Activated CD4-positive, alpha-beta memory T cell treated with anti-CD3 and anti-CD28 coated beads for 36 hours (primary cell): ENCODE measurements at regions of chr6 and their contacts with region 1.

Region 1: GRCh38 chr6:109690737-109691621 is at the starts of genes AK9 and FIG4:
- DNase-seq: peak; percentile 95
- H3K4me3 Mint-ChIP-seq: peak within 1 kb of the TSS; percentile 96
- H3K27ac Mint-ChIP-seq: peak within 1 kb of the TSS; percentile 89
- H3K4me1 Mint-ChIP-seq: peaks cover 30% of the 10 kb centered on the region
- H3K27me3 Mint-ChIP-seq: no peaks in the 10 kb centered on the region
- total RNA-seq, gene AK9: 2.2 to 2.8 TPM
- total RNA-seq, gene FIG4: 17.3 to 18.2 TPM

Region 2: DNA sequence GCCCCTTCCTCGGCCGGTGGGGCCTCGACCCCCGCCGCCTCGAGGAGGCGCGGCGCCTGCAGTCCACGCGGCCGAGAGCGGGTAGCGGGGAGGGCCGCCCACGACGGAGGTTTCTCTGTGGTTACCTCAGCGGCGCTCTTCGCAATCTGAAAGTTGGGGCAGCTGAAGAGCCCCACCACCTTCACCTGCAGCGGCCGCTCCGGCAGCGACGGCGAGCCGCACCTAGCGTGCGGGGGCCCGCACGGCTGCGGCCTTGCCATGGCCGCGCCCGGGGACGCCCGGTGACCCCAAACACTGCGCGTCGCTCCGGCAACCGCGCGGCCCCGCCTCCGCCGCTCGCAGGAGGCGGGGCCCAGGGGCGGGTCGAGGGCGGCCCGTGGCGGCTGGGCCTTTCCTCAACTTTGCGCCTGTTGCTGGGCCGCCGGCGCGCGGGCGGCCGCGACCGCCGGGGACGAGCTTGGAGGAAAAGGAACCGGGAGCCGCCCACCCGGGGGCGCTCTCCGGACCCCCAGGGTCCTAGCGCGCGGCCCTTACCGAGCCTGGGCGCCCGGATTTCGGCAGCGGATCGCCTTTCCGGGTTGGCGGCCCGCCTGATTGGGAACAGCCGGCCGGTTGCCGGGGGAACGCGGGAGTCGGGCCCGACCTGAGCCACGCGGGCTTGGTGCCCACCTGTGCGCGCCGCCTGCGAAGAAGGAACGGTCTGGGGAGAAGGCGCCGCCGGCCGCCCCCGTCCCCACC is 250.5 kb before region 1 on chr6 and contains the starts of genes PPIL6 and SMPD2:
- CTCF ChIA-PET with region 1: no interaction called
- POLR2A ChIA-PET with region 1: no interaction called
- intact Hi-C with region 1: loop called (anchors 1 kb)
- DNase-seq: peak; percentile 84
- H3K4me3 Mint-ChIP-seq: peak within 1 kb of the TSS; percentile 87
- H3K27ac Mint-ChIP-seq: peak within 1 kb of the TSS; percentile 82
- H3K4me1 Mint-ChIP-seq: peaks cover 21% of the 10 kb centered on the region
- H3K27me3 Mint-ChIP-seq: no peaks in the 10 kb centered on the region
- total RNA-seq, gene PPIL6: 0.43 to 0.46 TPM
- total RNA-seq, gene SMPD2: 9.7 TPM

Region 3: GRCh38 chr6:109526905-109527628 is 163.9 kb before region 1 on chr6:
- CTCF ChIA-PET with region 1: interaction called, 3 read pairs
- POLR2A ChIA-PET with region 1: no interaction called
- intact Hi-C with region 1: loop called (anchors 2 kb)
- DNase-seq: peak; percentile 45
- H3K4me3 Mint-ChIP-seq: no peak overlapping the region
- H3K27ac Mint-ChIP-seq: no peak overlapping the region
- H3K4me1 Mint-ChIP-seq: no peaks in the 10 kb centered on the region
- H3K27me3 Mint-ChIP-seq: no peaks in the 10 kb centered on the region

Region 4: DNA sequence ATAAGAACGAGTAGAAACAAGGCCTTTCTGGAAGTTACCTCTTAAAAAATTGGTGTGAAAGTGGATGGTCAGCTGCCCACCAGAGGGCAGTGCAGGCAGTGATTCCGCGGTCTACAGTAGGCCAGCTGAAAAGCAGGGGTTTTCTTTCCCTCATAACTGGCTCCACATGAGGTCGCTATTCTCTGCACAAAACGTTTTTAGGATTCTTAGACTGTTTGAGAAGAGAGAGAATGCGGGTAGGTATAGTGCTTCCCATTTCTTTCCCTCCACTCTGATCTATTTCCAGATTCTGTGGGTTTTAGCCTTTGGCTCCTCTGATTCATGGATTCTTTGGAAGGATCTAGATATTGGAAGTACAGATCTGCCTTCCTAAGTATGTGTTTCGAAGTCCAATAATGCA is 14.3 kb after region 1 on chr6:
- CTCF ChIA-PET with region 1: interaction called, 9 read pairs
- POLR2A ChIA-PET with region 1: no interaction called
- intact Hi-C with region 1: loop called (anchors 2 kb)
- DNase-seq: peak; percentile 87
- H3K4me3 Mint-ChIP-seq: no peak overlapping the region
- H3K27ac Mint-ChIP-seq: no peak overlapping the region
- H3K4me1 Mint-ChIP-seq: peaks cover 2% of the 10 kb centered on the region
- H3K27me3 Mint-ChIP-seq: no peaks in the 10 kb centered on the region

Region 5: GRCh38 chr6:110114004-110114403 is 423.0 kb after region 1 on chr6:
- CTCF ChIA-PET with region 1: no interaction called
- POLR2A ChIA-PET with region 1: no interaction called
- intact Hi-C with region 1: no loop called
- DNase-seq: no peak
- H3K4me3 Mint-ChIP-seq: no peak overlapping the region
- H3K27ac Mint-ChIP-seq: no peak overlapping the region
- H3K4me1 Mint-ChIP-seq: no peaks in the 10 kb centered on the region
- H3K27me3 Mint-ChIP-seq: peaks cover 4% of the 10 kb centered on the region